GM10248 (cell line): ENCODE measurements at regions of chr17 and their contacts with region 1.

Region 1: DNA sequence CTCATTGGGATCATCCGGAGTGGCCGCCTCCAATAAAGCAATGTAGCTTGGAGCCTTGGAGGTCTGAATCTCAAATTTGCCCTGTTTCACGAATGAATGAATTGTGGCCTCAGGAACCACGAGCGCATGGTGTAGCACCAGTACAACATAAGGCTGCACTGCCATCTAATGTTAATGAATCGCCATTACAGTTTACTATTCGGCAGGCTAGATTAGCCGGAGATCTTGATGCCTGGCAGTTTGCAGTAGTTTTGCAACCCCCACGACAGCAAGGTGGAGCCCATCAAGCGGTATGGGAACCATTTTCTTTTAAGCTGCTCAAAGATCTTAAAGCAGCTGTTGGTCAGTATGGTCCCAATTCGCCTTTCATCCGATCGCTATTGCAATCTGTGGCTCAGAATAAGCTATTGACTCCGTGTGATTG is 18.8 kb downstream of the ALOX15B start:
- DNase-seq: peak; percentile 79
- CTCF ChIP-seq: peak; percentile 74

Region 2: GRCh38 chr17:7745748-7746470 is 311.8 kb before region 1 on chr17:
- CTCF ChIA-PET with region 1: interaction called, 18 read pairs
- POLR2A ChIA-PET with region 1: no interaction called
- DNase-seq: no peak
- CTCF ChIP-seq: no peak

Region 3: DNA sequence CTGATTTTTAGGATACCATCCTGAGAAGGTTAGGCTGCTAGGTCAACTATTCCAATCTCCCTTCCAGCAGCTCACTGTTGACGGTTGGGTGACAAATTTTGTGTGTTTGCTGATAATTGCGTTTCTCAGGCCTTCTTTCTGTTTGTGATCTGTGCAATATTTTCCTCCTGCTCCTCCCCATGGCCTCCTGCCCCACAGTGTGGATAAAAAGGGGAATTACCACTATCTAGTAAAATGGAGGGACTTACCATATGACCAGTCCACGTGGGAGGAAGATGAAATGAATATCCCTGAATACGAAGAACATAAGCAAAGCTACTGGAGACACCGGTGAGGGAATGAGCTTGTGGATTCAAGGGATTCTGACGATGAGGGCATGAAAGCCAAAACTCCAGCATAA is 159.9 kb before region 1 on chr17:
- CTCF ChIA-PET with region 1: interaction called, 13 read pairs
- POLR2A ChIA-PET with region 1: no interaction called
- DNase-seq: no peak
- CTCF ChIP-seq: no peak

Region 4: DNA sequence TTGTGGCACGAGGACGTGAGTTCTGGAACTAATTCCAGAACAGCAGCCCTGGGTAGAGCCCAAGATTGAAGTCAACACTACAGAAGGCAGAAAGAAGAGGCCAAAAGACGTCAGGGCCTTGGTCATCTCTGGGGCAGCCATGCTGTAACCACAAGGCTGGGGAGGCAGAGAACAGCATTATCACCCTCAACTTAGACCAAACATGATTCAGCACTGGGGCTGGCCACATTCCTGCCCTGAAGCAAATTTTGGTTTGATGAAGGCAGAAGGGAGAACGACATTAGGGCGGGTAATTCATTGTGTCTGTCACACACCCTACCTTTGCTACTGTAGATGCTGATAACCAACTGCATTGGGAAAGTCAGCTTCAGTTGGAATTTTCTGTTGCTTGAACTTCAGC is 28.6 kb before region 1 on chr17:
- CTCF ChIA-PET with region 1: interaction called, 11 read pairs
- POLR2A ChIA-PET with region 1: no interaction called
- DNase-seq: no peak
- CTCF ChIP-seq: no peak

Region 5: DNA sequence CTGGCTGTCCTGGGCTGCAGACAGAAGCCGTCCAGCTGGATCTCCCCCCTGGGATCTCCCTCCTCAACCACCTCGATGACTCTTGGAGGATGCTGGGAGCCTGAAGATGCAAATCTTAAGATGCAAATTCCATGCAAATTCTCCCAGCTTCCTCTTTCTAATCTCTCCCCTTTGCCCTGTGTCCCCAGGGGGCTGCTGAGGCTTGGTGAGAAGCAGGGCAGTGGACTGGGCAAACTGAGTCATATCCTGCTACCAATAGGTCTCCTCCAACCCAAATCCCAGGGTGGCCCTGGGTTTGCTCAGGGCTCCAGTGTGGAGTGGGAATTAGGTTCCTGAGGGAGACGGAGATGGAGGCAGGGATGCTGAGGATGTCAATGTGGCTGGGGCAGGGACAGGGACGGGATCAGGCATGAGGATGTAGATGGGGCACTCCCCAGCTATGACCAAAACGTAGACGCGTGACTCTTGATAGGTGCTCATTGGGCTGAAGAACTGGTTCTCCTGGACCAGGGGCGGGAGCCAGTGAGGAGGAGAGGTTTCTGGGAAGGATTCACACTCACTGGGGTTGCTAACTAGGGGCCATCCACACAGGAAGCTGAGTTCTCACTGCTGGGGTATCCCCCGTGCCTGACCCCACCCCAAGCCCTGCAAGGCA is 33.5 kb after region 1 on chr17:
- CTCF ChIA-PET with region 1: interaction called, 107 read pairs
- POLR2A ChIA-PET with region 1: no interaction called
- DNase-seq: peak; percentile 70
- CTCF ChIP-seq: no peak

Region 6: DNA sequence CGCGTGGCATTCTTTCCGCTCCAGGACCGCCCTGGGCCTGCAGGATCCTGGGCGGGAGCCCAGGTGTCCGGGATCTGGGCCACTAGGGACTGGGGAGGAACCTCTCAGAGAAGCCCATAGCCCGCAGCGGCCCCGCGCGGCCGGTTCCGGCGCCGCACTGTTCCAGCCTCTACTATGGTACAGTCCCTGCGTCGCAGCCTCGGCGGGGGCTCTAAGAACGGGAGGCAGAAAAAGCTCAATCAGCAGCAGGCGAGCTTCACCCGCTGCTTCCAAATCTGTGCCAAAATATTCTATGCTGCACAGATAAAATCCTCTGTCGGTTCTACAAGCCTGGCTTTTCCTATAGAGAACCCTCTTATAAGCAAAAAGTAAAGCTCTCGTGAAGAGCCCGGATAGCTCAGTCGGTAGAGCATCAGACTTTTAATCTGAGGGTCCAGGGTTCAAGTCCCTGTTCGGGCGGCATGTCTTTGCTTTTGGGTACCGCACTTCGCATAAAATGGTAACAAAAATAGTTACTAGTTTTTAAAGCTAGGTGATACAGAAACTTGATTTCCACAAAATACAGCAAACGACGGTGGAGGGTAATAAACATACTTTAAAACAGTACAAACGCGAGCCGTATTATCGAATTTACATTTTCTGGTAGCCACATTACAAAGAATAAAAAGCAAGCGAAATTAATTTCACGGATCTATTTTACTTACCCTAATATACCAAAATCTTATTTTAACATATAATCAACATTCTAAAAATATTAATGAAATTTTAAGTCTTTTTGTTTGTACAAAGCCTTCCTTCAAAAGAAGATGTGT is 61.3 kb after region 1 on chr17:
- CTCF ChIA-PET with region 1: interaction called, 102 read pairs
- POLR2A ChIA-PET with region 1: no interaction called
- DNase-seq: peak; percentile 87
- CTCF ChIP-seq: peak; percentile 83